ENCODE measurements at regions of chr1 and their contacts with region 1.

Region 1: GRCh38 chr1:12658531-12659453 is 14.9 kb downstream of the AADACL4 start:
- DNase-seq: no peak
- ATAC-seq: peak; percentile 70

Region 2: DNA sequence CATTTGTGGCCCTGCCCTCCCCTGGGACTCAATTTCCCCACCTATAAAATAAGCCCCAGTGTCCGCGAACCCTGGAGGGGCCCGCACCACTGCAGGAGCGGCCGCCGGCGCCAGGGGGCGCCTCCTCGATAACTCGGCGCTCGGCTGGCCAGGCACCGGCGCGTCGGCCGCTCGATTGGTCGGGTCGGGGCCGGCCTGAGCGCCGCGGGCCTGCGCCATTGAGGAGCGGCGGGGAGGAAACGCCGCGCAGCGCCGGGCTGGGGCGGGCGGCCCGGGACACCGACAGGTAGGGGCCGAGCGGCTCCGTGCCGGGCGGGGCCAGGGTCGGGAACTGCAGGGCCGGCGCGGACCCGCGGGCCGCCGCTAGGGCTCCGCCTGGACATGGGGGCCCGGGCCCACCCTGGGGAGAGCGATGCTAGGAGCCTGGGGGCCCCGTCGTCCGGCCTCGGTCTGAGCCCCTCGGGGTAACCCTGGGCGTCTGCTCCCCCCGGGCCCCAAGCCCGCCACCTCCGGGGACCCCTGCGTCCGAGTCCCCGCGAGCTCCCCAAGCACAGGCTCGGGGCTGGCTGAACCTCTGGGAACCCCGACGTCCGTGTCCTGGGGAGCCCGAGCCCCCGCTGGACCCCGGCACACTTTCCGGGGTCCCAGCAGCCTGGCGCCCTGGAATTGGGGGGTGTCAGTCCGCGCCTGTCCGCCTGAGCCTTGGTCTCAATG is 428.8 kb before region 1 on chr1 and contains the start of gene VPS13D:
- intact Hi-C with region 1: loop called (anchors 1 kb)
- DNase-seq: peak; percentile 96
- ATAC-seq: peak; percentile 91
- total RNA-seq, gene VPS13D: 105 TPM

Region 3: DNA sequence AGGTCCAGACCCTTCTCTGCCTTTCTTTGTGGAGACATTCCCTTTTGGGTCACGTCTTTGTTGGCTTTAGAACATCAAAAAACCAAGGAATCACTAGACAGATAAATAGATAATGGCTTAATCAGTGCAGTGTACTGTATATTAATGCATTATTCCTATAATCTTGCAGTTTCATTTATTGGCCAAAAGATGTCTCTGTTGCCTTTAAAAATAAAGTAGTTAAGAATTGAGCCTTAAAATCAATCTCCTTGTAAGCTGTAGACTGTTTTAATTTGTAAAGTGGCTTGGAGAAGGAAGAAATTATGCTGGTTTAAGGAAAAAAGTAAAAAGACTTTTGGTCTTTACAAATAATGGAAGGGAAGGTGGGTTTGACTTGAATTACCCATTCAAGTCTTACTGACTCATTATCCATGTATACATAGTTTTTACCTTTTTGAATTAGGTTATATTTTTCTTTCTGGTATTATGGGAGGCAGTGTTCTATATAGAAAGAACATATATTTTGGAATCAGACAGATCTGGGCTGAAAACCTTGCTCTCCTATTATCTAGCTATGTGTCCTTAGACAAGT is 344.4 kb before region 1 on chr1:
- intact Hi-C with region 1: loop called (anchors 2 kb)
- DNase-seq: no peak
- ATAC-seq: peak; percentile 57